Transverse colon (tissue), 4 donors: ENCODE measurements at regions of chr15 and their contacts with region 1.

Region 1: DNA sequence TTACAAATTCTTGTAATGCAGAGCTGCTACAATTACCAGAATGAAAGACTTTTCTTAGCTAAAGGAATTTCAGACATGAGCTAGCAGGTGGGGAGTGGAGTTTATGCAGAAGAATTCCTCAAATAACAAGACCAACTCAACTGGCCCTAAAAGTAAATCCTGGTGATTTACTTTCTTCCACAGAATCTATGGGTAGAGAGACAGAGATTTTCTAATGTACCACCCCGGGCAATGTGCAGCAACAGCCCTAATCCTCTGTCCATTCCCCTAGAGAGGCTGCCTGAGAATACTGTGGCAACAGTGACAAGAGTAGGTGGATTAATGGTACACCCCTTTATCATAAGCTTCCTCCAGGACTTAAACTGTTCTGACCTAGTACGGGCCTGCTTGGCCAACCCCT is 55.2 kb downstream of the AQR start:
- DNase-seq: no peak
- H3K4me3 ChIP-seq: no peak overlapping the region
- H3K27ac ChIP-seq: no peak overlapping the region
- H3K4me1 ChIP-seq: no peaks in the 10 kb centered on the region
- H3K27me3 ChIP-seq: no peaks in the 10 kb centered on the region
- CTCF ChIP-seq: no peak
- EP300 ChIP-seq: no peak
- POLR2A ChIP-seq: no peak

Region 2: DNA sequence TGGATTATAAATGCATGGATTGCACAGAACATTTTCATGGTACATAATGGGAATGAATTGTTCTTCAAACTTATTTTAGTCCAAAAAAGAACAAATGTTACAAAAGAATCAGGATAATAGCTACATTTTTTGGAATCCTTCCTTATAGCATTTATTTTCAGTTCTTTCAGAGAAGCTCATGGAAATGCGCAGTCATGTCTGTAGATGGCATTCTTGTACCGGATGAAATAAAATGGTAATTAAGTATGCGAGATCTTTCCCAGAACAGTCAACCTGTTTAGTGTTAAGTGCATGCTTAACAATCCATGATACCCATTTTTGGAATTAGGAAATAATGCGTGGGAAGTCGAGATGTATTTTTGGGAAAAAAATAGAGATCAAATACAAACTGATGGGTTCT is 292.6 kb before region 1 on chr15:
- in situ Hi-C with region 1: loop called in 1 of 4 experiments (anchors 10 kb)
- intact Hi-C with region 1: no loop called
- DNase-seq: no peak
- H3K4me3 ChIP-seq: no peak overlapping the region
- H3K27ac ChIP-seq: no peak overlapping the region
- H3K4me1 ChIP-seq: no peaks in the 10 kb centered on the region
- H3K27me3 ChIP-seq: no peaks in the 10 kb centered on the region
- CTCF ChIP-seq: peak in 3 of 5 experiments; percentile 7 to 17 (median 9)
- EP300 ChIP-seq: no peak
- POLR2A ChIP-seq: no peak

Region 3: DNA sequence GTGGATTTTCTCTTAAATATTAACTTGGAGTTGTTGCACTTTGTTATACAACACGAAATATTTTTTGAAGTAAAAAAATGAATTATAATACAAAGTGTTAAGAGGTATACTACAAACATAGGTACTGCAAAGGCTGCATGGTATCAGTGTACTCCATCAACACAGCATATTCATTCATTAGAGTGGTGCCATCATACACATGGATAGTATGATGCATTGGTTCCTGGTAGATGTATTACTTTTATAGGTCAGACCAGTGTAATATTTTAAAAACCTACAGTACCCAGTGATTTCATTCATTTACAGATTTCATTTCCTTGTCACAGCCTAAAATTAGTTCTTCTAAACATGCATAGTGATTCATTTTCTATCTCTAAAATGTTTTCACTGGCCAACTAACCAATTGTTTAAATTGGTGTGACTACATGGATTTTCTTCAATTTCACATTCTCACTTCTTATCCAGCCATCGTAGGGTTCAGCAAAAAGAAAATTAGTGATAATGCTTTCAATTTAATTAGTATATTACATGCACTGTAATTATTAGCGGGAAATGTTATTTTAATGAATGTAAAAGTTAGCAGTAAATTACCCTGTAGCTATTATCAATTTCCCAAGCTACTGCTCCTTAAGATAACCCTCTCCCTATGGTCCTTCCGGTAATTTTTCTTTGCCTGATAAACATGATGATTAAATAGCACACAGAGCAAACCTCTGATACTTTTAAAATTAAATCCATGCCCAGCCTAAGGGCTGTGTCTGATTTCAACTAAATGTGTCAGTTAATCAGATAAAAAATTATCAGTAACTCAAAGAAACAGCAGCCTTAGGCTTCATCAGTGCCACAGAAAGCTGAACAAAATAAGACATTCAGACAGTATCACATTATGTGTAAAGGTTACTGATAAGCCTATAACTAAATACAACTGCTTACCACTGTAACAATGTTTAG is 563.3 kb after region 1 on chr15:
- in situ Hi-C with region 1: no loop called
- intact Hi-C with region 1: no loop called
- DNase-seq: no peak
- H3K4me3 ChIP-seq: no peak overlapping the region
- H3K27ac ChIP-seq: no peak overlapping the region
- H3K4me1 ChIP-seq: peaks cover 0 to 10% (median 0%) of the 10 kb centered on the region in 4 donors
- H3K27me3 ChIP-seq: no peaks in the 10 kb centered on the region
- CTCF ChIP-seq: no peak
- EP300 ChIP-seq: no peak
- POLR2A ChIP-seq: no peak